Mammary epithelial cell (primary cell): ENCODE measurements at regions of chrX and their contacts with region 1.

Region 1: GRCh38 chrX:1453951-1454785 is 1.5 kb upstream of the ASMTL start:
- DNase-seq: peak; percentile 67
- H3K4me3 ChIP-seq: no peak overlapping the region
- H3K27ac ChIP-seq: no peak overlapping the region
- H3K4me1 ChIP-seq: no peaks in the 10 kb centered on the region
- H3K27me3 ChIP-seq: no peaks in the 10 kb centered on the region
- CTCF ChIP-seq: peak; percentile 56 to 95

Region 2: GRCh38 chrX:1580735-1581531 is 126.8 kb after region 1 on chrX:
- CTCF ChIA-PET with region 1: no interaction called
- dilution Hi-C with region 1: no loop called
- in situ Hi-C with region 1: no loop called
- intact Hi-C with region 1: loop called (anchors 1 kb)
- DNase-seq: peak; percentile 32
- H3K4me3 ChIP-seq: no peak overlapping the region
- H3K27ac ChIP-seq: no peak overlapping the region
- H3K4me1 ChIP-seq: no peaks in the 10 kb centered on the region
- H3K27me3 ChIP-seq: no peaks in the 10 kb centered on the region
- CTCF ChIP-seq: peak; percentile 67 to 72

Region 3: GRCh38 chrX:1657367-1658070 is 203.4 kb after region 1 on chrX:
- CTCF ChIA-PET with region 1: no interaction called
- dilution Hi-C with region 1: no loop called
- in situ Hi-C with region 1: no loop called
- intact Hi-C with region 1: loop called (anchors 10 kb)
- DNase-seq: peak; percentile 82
- H3K4me3 ChIP-seq: peak overlapping the region; percentile 43 to 64 (median 59)
- H3K27ac ChIP-seq: peak overlapping the region; percentile 65
- H3K4me1 ChIP-seq: peaks cover 9% of the 10 kb centered on the region
- H3K27me3 ChIP-seq: no peaks in the 10 kb centered on the region
- CTCF ChIP-seq: peak in 1 of 2 donors; percentile 28

Region 4: DNA sequence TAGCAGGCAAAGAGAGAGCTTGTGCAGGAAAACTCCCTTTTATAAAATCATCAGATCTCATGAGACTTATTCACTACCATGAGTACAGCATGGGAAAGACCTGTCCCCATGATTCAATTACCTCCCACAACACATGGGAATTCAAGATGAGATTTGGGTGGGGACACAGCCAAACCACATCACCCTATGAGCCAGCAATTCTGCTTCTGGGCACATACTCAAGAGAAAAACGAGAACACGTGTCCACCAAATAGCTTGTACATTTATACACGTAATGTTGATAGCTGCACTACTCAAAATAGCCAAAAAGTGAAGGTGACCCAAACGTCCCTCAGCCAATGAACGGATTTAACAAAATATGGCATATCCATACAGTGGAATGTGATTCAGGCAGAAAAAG is 1141.1 kb after region 1 on chrX:
- CTCF ChIA-PET with region 1: no interaction called
- dilution Hi-C with region 1: no loop called
- in situ Hi-C with region 1: no loop called
- intact Hi-C with region 1: loop called (anchors 1 kb)
- DNase-seq: peak; percentile 78
- H3K4me3 ChIP-seq: no peak overlapping the region
- H3K27ac ChIP-seq: no peak overlapping the region
- H3K4me1 ChIP-seq: no peaks in the 10 kb centered on the region
- H3K27me3 ChIP-seq: no peaks in the 10 kb centered on the region
- CTCF ChIP-seq: no peak

Region 5: GRCh38 chrX:2614911-2615310 is 1160.7 kb after region 1 on chrX:
- CTCF ChIA-PET with region 1: no interaction called
- dilution Hi-C with region 1: no loop called
- in situ Hi-C with region 1: loop called in 1 of 2 experiments (anchors 10 kb)
- intact Hi-C with region 1: no loop called
- DNase-seq: peak; percentile 43
- H3K4me3 ChIP-seq: no peak overlapping the region
- H3K27ac ChIP-seq: no peak overlapping the region
- H3K4me1 ChIP-seq: no peaks in the 10 kb centered on the region
- H3K27me3 ChIP-seq: no peaks in the 10 kb centered on the region
- CTCF ChIP-seq: peak in 1 of 2 donors; percentile 14

Region 6: GRCh38 chrX:2819345-2820135 is 1365.4 kb after region 1 on chrX:
- CTCF ChIA-PET with region 1: no interaction called
- dilution Hi-C with region 1: no loop called
- in situ Hi-C with region 1: no loop called
- intact Hi-C with region 1: loop called (anchors 10 kb)
- DNase-seq: peak; percentile 12
- H3K4me3 ChIP-seq: no peak overlapping the region
- H3K27ac ChIP-seq: no peak overlapping the region
- H3K4me1 ChIP-seq: no peaks in the 10 kb centered on the region
- H3K27me3 ChIP-seq: no peaks in the 10 kb centered on the region
- CTCF ChIP-seq: peak in 1 of 2 donors; percentile 25